ENCODE measurements at regions of chr2 and their contacts with region 1.

Region 1: GRCh38 chr2:172404824-172405223 is 22.6 kb upstream of the ITGA6 start:
- DNase-seq: peak in 1 of 2 experiments; percentile 26
- H3K4me3 ChIP-seq: no peak overlapping the region
- H3K27ac ChIP-seq: no peak overlapping the region
- H3K4me1 ChIP-seq: peaks cover 17% of the 10 kb centered on the region
- H3K27me3 ChIP-seq: no peaks in the 10 kb centered on the region
- CTCF ChIP-seq: no peak

Region 2: DNA sequence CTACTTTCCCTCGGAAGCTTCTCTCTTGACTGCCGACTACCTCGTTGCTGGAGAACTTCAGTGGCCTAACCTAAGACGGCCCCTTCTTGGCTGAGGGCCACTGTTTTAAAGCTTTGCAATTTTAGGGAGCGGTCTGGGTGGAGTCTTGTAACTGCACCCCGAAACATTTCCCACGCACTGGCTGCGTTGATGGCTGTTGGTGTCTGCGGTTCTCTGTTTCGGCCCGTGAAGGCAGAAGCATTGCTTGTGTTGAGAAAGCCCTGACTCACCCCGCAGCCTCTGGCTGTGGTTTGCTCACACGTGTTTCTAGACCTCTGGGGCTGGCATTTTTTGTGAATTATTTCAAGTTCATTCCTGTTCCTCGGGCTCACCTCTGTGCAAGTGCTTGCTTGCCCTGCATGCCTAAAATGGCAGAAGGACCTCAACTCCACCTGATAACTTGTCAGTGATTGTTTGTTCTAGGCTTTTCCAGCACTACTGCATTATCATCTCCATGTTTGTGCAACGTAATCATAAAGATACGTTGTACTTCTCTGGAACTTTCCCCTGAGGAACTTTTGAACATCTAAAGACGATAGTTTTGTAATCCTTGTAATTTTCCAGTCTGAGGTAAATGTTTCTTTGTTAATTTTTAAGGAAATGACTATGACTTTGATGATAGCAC is 207.9 kb before region 1 on chr2:
- CTCF ChIA-PET with region 1: no interaction called
- POLR2A ChIA-PET with region 1: no interaction called
- intact Hi-C with region 1: no loop called
- DNase-seq: peak in 1 of 2 experiments; percentile 91
- H3K4me3 ChIP-seq: no peak overlapping the region
- H3K27ac ChIP-seq: no peak overlapping the region
- H3K4me1 ChIP-seq: peaks cover 9% of the 10 kb centered on the region
- H3K27me3 ChIP-seq: no peaks in the 10 kb centered on the region
- CTCF ChIP-seq: no peak

Region 3: GRCh38 chr2:172246649-172247048 is 158.2 kb before region 1 on chr2:
- CTCF ChIA-PET with region 1: no interaction called
- POLR2A ChIA-PET with region 1: no interaction called
- intact Hi-C with region 1: loop called (anchors 1 kb)
- DNase-seq: peak in 1 of 2 experiments; percentile 46
- H3K4me3 ChIP-seq: no peak overlapping the region
- H3K27ac ChIP-seq: peak overlapping the region; percentile 70
- H3K4me1 ChIP-seq: peaks cover 62% of the 10 kb centered on the region
- H3K27me3 ChIP-seq: no peaks in the 10 kb centered on the region
- CTCF ChIP-seq: no peak

Region 4: DNA sequence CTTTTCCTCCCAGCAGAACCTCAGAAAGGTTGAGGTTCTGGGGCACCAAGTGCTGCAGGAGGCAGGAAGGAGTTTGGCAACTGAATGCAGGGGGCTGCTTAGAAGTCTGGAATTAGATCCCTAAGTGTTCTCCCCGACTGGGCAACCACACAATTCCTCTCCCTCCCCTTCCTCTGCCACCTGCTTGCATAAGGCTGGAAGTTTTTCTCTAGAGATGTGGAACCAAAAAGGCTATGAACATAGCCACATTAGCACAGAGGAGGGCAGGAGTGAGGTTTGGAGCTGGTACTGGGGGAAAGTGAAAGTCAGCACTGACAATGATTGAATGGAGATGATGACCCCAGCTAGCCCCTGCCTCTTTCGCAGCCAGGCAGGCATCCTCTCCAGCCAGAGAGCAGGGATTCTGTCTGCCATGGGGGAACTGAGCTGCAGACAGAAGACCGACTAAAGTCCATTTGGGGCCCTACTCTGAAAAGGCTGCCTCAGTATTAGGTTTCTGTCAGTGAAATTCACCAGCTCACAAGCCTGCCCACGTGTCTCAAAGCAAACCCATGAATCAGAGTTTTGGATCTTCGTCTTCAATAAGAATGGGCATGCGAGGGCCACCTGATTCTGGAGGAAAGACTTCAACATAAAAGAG is 65.3 kb before region 1 on chr2:
- CTCF ChIA-PET with region 1: no interaction called
- POLR2A ChIA-PET with region 1: no interaction called
- intact Hi-C with region 1: loop called (anchors 5 kb)
- DNase-seq: no peak
- H3K4me3 ChIP-seq: no peak overlapping the region
- H3K27ac ChIP-seq: no peak overlapping the region
- H3K4me1 ChIP-seq: peaks cover 8% of the 10 kb centered on the region
- H3K27me3 ChIP-seq: no peaks in the 10 kb centered on the region
- CTCF ChIP-seq: no peak

Region 5: DNA sequence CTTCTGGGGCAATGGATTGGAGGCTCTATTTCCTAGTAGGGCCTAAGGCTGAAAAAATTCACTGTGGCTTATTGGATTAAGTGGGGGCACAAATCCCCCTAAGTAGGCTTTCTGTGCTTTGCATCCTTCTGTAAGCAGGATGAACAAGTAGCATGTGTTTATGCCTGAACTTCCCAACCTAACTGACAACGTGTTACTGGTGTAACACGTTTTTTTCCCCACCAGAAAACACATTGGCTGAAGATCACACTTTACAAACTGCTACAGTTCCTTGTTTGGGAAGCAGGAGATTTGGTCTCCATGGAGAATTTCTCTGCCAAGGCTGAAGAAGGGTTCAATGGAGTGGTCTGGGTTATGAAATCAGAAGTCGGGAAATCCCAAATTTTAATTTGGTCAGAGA is 15.4 kb after region 1 on chr2:
- CTCF ChIA-PET with region 1: no interaction called
- POLR2A ChIA-PET with region 1: no interaction called
- intact Hi-C with region 1: loop called (anchors 1 kb)
- DNase-seq: no peak
- H3K4me3 ChIP-seq: no peak overlapping the region
- H3K27ac ChIP-seq: no peak overlapping the region
- H3K4me1 ChIP-seq: no peaks in the 10 kb centered on the region
- H3K27me3 ChIP-seq: no peaks in the 10 kb centered on the region
- CTCF ChIP-seq: no peak

Region 6: DNA sequence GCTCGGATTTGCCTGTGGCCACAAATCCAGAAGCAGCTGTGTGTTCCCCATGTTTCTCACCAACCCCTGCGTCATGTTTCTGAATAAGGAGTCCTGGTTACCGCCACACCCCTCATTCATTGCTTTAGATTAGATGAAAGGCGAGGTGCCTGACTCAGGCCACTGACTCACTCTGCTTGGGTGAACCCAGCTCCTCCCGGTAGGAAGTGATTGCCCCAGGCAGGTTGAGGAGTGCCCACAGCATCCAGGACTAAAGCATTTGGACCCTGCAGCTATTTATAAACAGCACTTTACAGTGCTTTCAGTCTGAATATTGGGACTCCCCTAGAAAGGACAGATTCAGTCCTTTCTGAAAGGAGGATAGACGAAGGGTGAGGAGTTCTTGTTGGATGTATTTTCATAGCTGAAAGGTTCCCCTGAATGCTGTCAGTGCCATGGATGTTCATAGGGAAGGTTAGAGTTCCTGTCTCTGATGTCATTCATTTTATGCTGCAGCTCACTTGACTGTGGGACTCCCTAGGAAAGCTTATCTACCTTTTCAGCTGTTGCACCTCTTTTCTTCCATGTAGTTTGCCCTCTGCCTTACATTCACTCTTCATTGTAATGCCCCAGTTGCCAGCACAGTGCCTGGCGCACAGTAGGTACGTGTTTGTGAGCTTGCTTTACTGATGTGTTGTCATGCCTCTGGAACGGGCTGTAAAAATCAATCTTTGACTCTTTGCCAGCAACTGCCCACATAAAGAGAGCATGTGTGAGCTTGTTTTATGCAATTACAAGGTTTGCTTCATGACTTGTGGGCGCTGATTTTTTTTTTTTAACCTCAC is 37.5 kb after region 1 on chr2:
- CTCF ChIA-PET with region 1: interaction called, 4 read pairs
- POLR2A ChIA-PET with region 1: no interaction called
- intact Hi-C with region 1: loop called (anchors 1 kb)
- DNase-seq: peak; percentile 100
- H3K4me3 ChIP-seq: peak overlapping the region; percentile 5; the same call in 1 of the 2 replicates
- H3K27ac ChIP-seq: peak overlapping the region; percentile 81
- H3K4me1 ChIP-seq: peaks cover 80% of the 10 kb centered on the region
- H3K27me3 ChIP-seq: no peaks in the 10 kb centered on the region
- CTCF ChIP-seq: no peak

Region 7: GRCh38 chr2:172588931-172589330 is 184.1 kb after region 1 on chr2:
- CTCF ChIA-PET with region 1: no interaction called
- POLR2A ChIA-PET with region 1: no interaction called
- intact Hi-C with region 1: no loop called
- DNase-seq: peak in 1 of 2 experiments; percentile 73
- H3K4me3 ChIP-seq: no peak overlapping the region
- H3K27ac ChIP-seq: 0 out of 2 replicates have a peak overlapping the region, but pooled peaks have one; percentile 1
- H3K4me1 ChIP-seq: peaks cover 13% of the 10 kb centered on the region
- H3K27me3 ChIP-seq: no peaks in the 10 kb centered on the region
- CTCF ChIP-seq: no peak

Measured in PC-9 (cell line).